ENCODE measurements at regions of chr19 and their contacts with region 1.

Region 1: GRCh38 chr19:16714702-16715287 is 4.9 kb upstream of the NWD1 start:
- DNase-seq: peak; percentile 76
- H3K4me3 Mint-ChIP-seq: peak overlapping the region; percentile 1
- H3K27ac Mint-ChIP-seq: no peak overlapping the region
- H3K4me1 Mint-ChIP-seq: peaks cover 11% of the 10 kb centered on the region
- H3K27me3 Mint-ChIP-seq: no peaks in the 10 kb centered on the region
- CTCF ChIP-seq: peak; percentile 98

Region 2: DNA sequence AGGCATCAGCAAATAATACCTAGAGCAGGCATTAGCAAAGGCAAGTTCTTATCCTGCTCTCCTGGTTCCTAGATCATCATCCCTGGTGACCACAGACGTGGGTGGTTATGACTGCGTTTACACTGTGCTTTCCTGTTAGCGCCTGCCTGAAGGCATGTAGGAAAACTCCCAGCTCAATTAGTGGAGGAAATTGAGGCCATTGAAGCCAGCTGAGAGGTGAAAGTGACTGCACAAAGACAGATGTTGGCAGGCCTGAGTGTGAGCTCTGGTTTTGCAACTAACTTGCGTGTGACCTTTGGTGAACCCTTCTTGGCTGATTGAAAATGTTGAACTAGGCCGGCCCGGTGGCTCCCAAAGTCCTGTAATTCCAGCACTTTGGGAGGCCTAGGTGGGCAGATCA is 12.7 kb before region 1 on chr19:
- CTCF ChIA-PET with region 1: interaction called, 10 read pairs
- POLR2A ChIA-PET with region 1: interaction called, 5 read pairs
- intact Hi-C with region 1: no loop called
- DNase-seq: peak; percentile 93
- H3K4me3 Mint-ChIP-seq: no peak overlapping the region
- H3K27ac Mint-ChIP-seq: no peak overlapping the region
- H3K4me1 Mint-ChIP-seq: peaks cover 10% of the 10 kb centered on the region
- H3K27me3 Mint-ChIP-seq: no peaks in the 10 kb centered on the region
- CTCF ChIP-seq: no peak

Region 3: DNA sequence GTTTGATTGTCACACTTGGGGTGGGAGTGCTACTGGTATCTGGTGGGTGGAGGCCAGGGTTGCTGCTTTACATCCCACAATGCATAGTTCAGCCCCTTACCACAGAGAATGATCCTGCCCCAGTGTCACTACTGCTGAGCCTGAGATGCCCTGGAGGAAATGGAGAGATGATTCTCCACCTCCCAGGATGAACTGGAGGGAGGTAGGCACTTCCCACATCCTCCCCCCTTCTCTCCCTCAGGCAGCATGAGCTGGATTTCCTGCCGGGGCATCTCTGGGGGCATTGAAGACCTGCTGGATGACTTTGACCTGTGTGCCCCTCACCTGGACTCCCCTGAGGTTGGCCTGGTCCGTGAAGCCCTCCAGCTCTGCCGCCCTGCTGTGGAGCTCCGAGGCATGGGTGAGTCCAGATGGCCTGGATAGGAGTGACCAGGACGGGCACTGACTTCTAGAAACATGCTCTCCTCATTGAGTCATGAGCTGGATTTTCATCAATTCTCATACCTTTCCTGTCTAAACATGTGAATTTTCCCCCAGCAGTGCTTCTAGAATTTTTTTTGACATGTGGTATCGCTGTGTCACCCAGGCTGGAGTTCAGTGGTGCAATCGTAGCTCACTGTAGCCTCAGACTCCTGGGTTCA is 50.1 kb after region 1 on chr19:
- CTCF ChIA-PET with region 1: interaction called, 53 read pairs
- POLR2A ChIA-PET with region 1: interaction called, 7 read pairs
- intact Hi-C with region 1: loop called (anchors 1 kb)
- DNase-seq: peak; percentile 74
- H3K4me3 Mint-ChIP-seq: peak overlapping the region; percentile 63
- H3K27ac Mint-ChIP-seq: peak overlapping the region; percentile 81
- H3K4me1 Mint-ChIP-seq: peaks cover 14% of the 10 kb centered on the region
- H3K27me3 Mint-ChIP-seq: no peaks in the 10 kb centered on the region
- CTCF ChIP-seq: no peak

Region 4: GRCh38 chr19:16771618-16772017 is 56.8 kb after region 1 on chr19:
- CTCF ChIA-PET with region 1: interaction called, 53 read pairs
- POLR2A ChIA-PET with region 1: interaction called, 6 read pairs
- intact Hi-C with region 1: loop called (anchors 1 kb)
- DNase-seq: peak; percentile 88
- H3K4me3 Mint-ChIP-seq: no peak overlapping the region
- H3K27ac Mint-ChIP-seq: no peak overlapping the region
- H3K4me1 Mint-ChIP-seq: no peaks in the 10 kb centered on the region
- H3K27me3 Mint-ChIP-seq: no peaks in the 10 kb centered on the region
- CTCF ChIP-seq: peak; percentile 89

Region 5: DNA sequence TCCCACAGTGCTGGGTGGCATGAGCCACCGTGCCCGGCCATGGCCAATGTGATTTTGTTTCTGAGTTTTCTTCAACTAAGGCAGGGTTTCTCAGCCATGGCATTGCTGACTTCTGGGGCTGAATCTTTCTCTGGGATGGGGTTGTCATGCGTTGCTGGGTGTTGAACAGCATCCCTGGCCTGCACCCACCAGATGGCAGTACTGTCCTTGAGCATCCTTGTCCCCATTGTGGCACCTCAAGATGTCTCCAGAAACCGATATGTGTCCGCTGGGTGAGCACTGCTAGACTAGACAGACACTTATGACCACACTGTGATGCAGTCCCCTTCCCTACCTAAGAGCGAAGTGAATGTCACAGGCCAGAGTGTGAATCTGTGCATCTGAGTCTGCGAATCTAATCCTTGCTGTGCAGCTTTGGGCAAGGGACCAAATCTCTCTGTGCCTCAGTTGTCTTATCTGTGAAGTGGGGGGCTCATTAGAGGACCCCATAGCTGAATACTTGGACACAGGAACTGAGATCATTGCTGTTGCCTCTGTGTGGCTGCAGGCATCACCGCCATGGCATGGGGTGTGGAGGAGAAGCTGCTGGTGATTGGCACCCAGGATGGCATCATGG is 64.1 kb after region 1 on chr19:
- CTCF ChIA-PET with region 1: interaction called, 53 read pairs
- POLR2A ChIA-PET with region 1: no interaction called
- intact Hi-C with region 1: loop called (anchors 2 kb)
- DNase-seq: peak; percentile 78
- H3K4me3 Mint-ChIP-seq: no peak overlapping the region
- H3K27ac Mint-ChIP-seq: no peak overlapping the region
- H3K4me1 Mint-ChIP-seq: no peaks in the 10 kb centered on the region
- H3K27me3 Mint-ChIP-seq: no peaks in the 10 kb centered on the region
- CTCF ChIP-seq: peak; percentile 70

Region 6: GRCh38 chr19:16897154-16897855 is 182.5 kb after region 1 on chr19:
- CTCF ChIA-PET with region 1: no interaction called
- POLR2A ChIA-PET with region 1: no interaction called
- intact Hi-C with region 1: loop called (anchors 1 kb)
- DNase-seq: peak; percentile 86
- H3K4me3 Mint-ChIP-seq: peak overlapping the region; percentile 72
- H3K27ac Mint-ChIP-seq: peak overlapping the region; percentile 31
- H3K4me1 Mint-ChIP-seq: no peaks in the 10 kb centered on the region
- H3K27me3 Mint-ChIP-seq: no peaks in the 10 kb centered on the region
- CTCF ChIP-seq: no peak

Region 7: GRCh38 chr19:17052439-17053210 is 337.8 kb after region 1 on chr19:
- CTCF ChIA-PET with region 1: interaction called, 4 read pairs
- POLR2A ChIA-PET with region 1: interaction called, 4 read pairs
- intact Hi-C with region 1: loop called (anchors 1 kb)
- DNase-seq: peak; percentile 63
- H3K4me3 Mint-ChIP-seq: no peak overlapping the region
- H3K27ac Mint-ChIP-seq: no peak overlapping the region
- H3K4me1 Mint-ChIP-seq: no peaks in the 10 kb centered on the region
- H3K27me3 Mint-ChIP-seq: no peaks in the 10 kb centered on the region
- CTCF ChIP-seq: peak; percentile 65